Head of caudate nucleus (tissue), 42 donors: ENCODE measurements at regions of chr4 and their contacts with region 1.

Region 1: DNA sequence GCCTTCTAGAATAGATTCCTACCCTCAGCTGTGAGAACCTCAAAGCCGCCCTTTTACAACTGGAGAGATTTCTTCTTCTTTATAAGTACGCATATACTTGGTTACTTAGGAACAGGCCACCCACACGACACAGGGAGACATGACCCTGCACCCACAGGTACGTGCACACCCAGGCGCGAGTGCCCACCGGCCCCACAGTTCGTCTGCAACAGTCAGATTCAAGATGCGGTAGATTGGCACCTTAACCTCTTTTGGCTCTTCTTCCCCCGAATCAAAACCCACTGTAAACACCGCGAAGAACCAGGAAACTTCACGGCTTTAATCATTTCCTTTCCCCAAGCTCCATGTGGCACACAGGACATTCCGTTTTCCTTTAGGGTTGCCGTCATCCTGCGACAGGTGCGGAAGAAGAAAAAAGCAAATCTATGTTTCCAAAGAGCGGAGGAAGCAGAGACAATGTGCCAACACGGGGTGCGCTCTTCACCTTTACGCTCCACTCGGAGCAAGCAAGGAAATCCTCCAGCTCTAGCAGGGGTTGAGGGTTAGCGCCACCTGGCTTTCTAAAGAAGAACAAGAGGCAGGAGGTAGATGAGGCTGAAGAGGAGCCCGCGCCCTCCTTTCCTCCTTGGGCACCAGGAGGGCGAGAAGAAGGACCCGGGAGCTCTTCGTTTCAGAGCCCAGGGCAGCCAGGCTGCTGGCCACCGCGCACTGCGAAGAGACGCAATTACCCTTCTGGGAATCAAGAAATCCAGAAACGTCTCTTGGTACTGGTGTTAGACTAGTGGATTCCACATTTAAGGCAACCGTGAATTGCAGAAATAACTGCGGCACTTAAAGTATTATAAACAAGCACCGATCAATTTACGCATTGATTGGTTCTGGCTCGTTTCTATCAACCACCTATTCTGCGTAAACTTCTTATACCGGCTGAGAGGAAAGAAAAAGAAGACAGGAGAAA is 35.7 kb downstream of the HAND2 start:
- DNase-seq: peak; percentile 17 to 86 (median 59)

Region 2: GRCh38 chr4:173318648-173319211 is 175.6 kb before region 1 on chr4:
- intact Hi-C with region 1: loop called (anchors 5 kb)
- DNase-seq: peak in 3 of 42 donors; percentile 20 to 30 (median 29)